ENCODE measurements at regions of chr4 and their contacts with region 1.

Region 1: DNA sequence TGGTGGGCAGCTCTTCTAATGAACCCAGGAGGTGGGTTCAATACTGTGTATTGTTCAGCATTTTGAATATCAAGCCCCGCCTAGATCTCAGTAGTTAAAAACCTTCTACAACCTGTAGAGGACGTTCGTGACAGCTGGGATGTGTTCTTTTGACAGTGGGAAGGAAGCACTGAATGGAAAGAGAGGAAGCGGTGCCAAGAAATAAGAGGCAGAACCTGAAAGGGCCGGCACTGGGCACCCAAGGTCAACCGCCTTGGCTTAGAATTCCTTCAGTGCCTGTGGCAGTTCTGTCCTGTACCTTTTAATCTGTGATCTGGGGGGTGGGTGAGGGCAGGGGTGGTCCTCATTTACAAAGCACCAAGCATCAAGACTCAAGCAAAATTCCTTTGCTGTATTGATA is 73.1 kb downstream of the CC2D2A start:
- DNase-seq: no peak
- ATAC-seq: no peak

Region 2: DNA sequence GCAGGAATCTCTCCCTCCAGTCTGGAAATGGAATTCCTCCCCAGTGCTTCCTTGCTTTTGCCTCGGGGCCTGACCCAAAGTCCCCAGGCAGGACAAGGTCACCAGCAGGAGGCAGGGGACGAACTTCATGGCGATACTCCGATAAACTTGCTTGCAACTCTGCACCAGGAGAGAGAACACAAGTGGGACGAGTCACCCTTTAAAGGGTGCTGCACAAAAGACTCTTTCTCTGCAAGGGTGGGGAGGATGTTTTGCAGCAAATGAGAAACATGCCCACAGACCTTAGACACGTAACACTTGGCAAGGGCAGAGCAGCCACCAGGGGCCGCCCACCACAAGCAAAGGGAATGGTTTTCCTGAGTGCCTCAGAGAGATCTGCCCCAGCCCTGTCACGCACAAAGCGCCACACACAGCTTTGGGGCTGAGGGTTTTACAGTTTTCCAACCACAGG is 420.2 kb after region 1 on chr4 and contains the start of gene FGFBP2:
- intact Hi-C with region 1: loop called (anchors 5 kb)
- DNase-seq: peak; percentile 69
- ATAC-seq: peak; percentile 87
- total RNA-seq, gene FGFBP2: 129 TPM